ENCODE measurements at regions of chr16 and their contacts with region 1.

Region 1: GRCh38 chr16:4766874-4767628 is at the start of gene ZNF500:
- DNase-seq: peak; percentile 98
- H3K4me3 Mint-ChIP-seq: peak within 1 kb of the TSS; percentile 93
- H3K27ac Mint-ChIP-seq: peak within 1 kb of the TSS; percentile 93
- H3K4me1 Mint-ChIP-seq: peaks cover 35% of the 10 kb centered on the region
- H3K27me3 Mint-ChIP-seq: no peaks in the 10 kb centered on the region
- total RNA-seq, gene ZNF500: 8.9 to 11.2 TPM

Region 2: GRCh38 chr16:4475880-4476788 is 290.9 kb before region 1 on chr16 and contains the start of gene HMOX2:
- CTCF ChIA-PET with region 1: no interaction called
- intact Hi-C with region 1: loop called (anchors 5 kb)
- DNase-seq: peak; percentile 95
- H3K4me3 Mint-ChIP-seq: peak within 1 kb of the TSS; percentile 89
- H3K27ac Mint-ChIP-seq: peak within 1 kb of the TSS; percentile 82
- H3K4me1 Mint-ChIP-seq: peaks cover 42% of the 10 kb centered on the region
- H3K27me3 Mint-ChIP-seq: no peaks in the 10 kb centered on the region
- total RNA-seq, gene HMOX2: 46.8 to 49.3 TPM

Region 3: GRCh38 chr16:4693296-4693955 is 73.6 kb before region 1 on chr16 and contains the start of gene NUDT16L1:
- CTCF ChIA-PET with region 1: no interaction called
- intact Hi-C with region 1: loop called (anchors 1 kb)
- DNase-seq: peak; percentile 96
- H3K4me3 Mint-ChIP-seq: peak within 1 kb of the TSS; percentile 83
- H3K27ac Mint-ChIP-seq: peak within 1 kb of the TSS; percentile 65
- H3K4me1 Mint-ChIP-seq: peaks cover 14% of the 10 kb centered on the region
- H3K27me3 Mint-ChIP-seq: no peaks in the 10 kb centered on the region
- total RNA-seq, gene NUDT16L1: 20.0 to 20.7 TPM

Region 4: GRCh38 chr16:4724661-4725270 is 42.3 kb before region 1 on chr16:
- CTCF ChIA-PET with region 1: no interaction called
- intact Hi-C with region 1: no loop called
- DNase-seq: no peak
- H3K4me3 Mint-ChIP-seq: no peak overlapping the region
- H3K27ac Mint-ChIP-seq: no peak overlapping the region
- H3K4me1 Mint-ChIP-seq: no peaks in the 10 kb centered on the region
- H3K27me3 Mint-ChIP-seq: no peaks in the 10 kb centered on the region

Region 5: DNA sequence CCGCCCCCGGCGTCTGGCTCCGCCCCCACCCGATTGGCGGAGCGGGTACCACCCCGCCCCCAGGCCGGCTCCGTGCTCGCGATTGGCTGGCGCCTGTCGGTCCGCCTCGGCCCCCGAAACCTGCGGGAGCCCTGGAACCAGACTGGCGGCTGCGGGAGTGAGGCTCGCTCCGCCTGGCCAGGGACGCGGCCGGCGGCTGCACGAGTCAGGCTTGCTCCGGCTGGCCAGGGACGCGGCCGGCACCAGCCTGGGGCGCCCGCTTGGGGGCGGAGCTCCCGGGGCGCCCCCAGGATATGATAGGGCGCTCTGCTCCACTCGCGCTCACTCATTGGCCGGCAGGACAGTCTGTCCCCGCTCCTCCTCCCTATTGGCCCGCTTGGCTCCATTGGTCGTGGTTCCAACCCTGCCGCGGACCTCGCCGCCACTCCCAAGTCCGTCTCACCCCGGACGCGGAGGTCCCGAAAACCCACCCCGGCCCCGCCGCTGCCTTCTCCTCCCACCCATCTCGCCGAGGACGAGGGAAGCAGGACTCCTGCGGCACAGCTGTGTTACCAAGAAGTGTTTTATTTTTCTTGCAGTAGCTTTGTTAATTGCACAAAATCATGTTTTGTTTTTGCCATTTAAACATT is 35.7 kb after region 1 on chr16:
- CTCF ChIA-PET with region 1: no interaction called
- intact Hi-C with region 1: loop called (anchors 1 kb)
- DNase-seq: peak; percentile 87
- H3K4me3 Mint-ChIP-seq: peak overlapping the region; percentile 77
- H3K27ac Mint-ChIP-seq: no peak overlapping the region
- H3K4me1 Mint-ChIP-seq: peaks cover 9% of the 10 kb centered on the region
- H3K27me3 Mint-ChIP-seq: no peaks in the 10 kb centered on the region